ENCODE measurements at regions of chr18 and their contacts with region 1.

Region 1: DNA sequence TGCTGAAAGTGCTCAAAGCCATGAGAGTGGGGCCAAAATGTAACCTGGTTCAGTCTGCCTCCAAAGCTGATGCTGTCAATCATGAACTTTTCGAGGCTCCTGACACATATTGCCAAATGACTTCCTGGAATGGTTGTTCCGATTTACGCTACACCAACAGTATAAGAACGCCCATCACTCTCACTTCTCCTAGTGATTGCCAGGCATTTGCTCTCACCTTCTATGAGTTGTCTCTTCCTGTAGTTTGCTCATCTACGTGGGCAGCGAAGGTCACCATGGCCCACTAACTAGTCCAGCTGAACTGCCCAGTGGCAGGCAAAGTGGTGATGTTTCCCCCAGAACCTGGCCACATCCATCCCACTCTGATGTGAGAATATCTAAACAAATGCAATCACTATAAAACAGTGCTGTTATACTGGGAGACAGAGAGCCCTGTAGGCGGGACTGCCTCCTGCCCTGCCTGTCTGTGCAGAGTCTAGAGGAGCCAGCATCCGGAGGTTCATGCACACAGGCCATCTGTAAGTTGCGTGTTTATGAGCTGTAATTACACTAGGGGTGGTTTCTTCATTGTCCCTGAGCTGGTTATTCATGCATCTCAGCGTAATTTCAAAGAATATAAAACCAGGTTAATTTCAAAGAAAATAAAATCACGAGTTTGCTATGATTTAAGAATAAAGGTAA is 8.8 kb upstream of the CABLES1 start:
- DNase-seq: no peak
- ATAC-seq: no peak
- H3K4me3 ChIP-seq: no peak overlapping the region
- H3K27ac ChIP-seq: no peak overlapping the region
- H3K4me1 ChIP-seq: peaks cover 0 to 16% (median 0%) of the 10 kb centered on the region in 9 donors
- H3K27me3 ChIP-seq: peaks cover 0 to 11% (median 0%) of the 10 kb centered on the region in 7 donors
- CTCF ChIP-seq: no peak

Region 2: GRCh38 chr18:23250893-23251656 is 124.6 kb after region 1 on chr18:
- intact Hi-C with region 1: no loop called
- DNase-seq: no peak
- ATAC-seq: peak in 2 of 8 donors; percentile 29 to 62
- H3K4me3 ChIP-seq: no peak overlapping the region
- H3K27ac ChIP-seq: peak overlapping the region in 1 of 10 donors; percentile 76
- H3K4me1 ChIP-seq: peaks cover 0 to 15% (median 0%) of the 10 kb centered on the region in 9 donors
- H3K27me3 ChIP-seq: no peaks in the 10 kb centered on the region
- CTCF ChIP-seq: no peak

Region 3: GRCh38 chr18:23377669-23378301 is 251.3 kb after region 1 on chr18:
- intact Hi-C with region 1: loop called in 3 of 10 experiments (anchors 5 kb)
- DNase-seq: no peak
- ATAC-seq: peak in 5 of 8 donors; percentile 48 to 66 (median 61)
- H3K4me3 ChIP-seq: no peak overlapping the region
- H3K27ac ChIP-seq: peak overlapping the region in 7 of 10 donors; percentile 19 to 56 (median 28)
- H3K4me1 ChIP-seq: peaks cover 0 to 15% (median 6%) of the 10 kb centered on the region in 9 donors
- H3K27me3 ChIP-seq: no peaks in the 10 kb centered on the region
- CTCF ChIP-seq: no peak

Measured in heart right ventricle (tissue), 16 donors.